GM10248 (cell line): ENCODE measurements at regions of chr1 and their contacts with region 1.

Region 1: DNA sequence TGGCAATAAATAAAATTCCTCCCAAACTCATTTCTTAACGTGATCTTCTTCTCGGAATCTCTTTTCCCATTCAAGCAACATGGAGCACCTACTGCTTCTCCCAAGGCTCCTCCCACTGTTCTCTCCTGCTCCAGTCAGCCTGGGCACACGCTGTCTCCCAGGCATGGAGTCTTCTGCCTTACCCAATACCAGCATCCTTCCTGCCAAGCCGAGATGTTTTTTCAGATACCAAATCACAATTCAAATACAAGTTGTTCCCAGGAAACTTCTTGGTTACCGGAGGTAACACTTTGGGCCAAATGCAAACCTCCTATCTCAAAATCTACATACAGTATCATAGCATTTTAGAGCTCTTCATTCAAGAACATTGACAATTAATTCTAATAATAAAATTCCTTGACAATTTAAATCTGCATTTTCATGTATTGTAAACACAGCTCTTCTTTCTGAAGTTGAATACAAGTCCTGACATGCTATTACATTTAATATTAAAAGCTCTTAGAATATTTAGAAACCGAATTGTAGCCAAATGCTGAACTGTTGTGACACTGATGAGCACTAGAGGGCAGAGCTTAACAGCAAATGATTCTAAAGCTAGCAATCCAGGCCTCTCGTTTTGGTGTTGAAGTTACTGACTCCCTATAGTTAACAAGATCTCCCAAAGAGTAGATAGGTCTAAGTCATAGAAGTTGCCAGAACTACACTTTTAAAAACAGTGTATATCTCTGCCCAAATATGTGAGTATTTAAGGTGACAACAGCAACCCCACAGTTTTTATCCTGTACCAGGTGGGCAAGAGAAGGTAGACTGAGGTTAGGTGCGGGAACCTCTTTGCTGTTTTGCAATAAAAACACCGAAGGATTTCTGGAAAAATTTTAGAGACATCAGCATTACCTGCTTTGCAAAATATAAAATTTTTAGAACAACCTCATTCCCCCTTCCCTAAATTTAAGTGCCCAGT is 52.3 kb downstream of the BCAR3 start:
- DNase-seq: peak; percentile 61
- CTCF ChIP-seq: peak; percentile 78

Region 2: GRCh38 chr1:93471911-93472310 is 157.5 kb before region 1 on chr1:
- CTCF ChIA-PET with region 1: no interaction called
- POLR2A ChIA-PET with region 1: no interaction called
- DNase-seq: no peak
- CTCF ChIP-seq: no peak

Region 3: DNA sequence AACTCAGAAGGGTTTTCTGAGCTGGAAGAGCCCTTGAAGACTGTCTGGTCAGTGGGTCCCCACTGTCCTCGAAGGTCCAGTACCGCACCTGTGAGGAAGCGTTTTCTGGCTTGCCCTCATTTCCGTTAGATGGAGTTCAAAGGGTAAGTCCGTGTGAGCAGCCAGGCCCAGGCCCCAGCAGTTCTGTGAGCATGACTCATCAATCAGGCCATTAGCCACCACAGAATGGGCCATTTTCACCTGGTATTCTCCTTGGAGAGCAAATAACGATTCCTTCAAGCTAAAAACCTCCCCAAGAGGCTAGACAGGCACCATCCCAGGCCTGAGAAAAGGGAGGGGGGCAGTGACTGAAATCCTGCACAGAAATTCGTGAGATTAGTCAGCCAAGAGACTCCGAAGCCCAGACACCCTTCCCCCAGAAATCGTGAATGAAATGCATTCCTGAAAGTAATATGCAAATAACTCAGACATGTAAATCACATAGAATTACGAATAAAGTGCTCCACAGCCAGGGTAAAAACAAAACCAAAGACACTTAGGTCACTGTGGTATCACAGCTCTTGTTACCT is 13.7 kb before region 1 on chr1:
- CTCF ChIA-PET with region 1: interaction called, 116 read pairs
- POLR2A ChIA-PET with region 1: no interaction called
- DNase-seq: peak; percentile 70
- CTCF ChIP-seq: no peak

Region 4: DNA sequence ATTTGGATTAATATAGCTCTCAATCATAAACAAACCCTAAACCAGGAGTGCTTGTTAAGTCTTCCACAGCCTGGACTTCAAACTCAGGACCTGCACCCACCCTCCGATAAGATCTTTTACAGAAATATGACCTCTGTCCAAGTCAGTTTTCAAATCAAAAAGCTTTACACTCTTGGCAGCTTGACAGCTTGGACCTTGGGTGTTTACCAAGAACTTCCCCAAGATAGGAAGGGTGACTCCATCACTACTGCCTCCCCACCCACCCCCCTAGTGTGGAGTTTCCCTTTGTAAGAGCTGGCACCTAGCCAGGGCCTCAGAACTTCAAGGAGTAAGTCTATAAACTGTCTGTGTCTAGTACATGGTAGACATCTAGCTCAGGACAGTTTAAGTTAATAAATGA is 42.7 kb after region 1 on chr1:
- CTCF ChIA-PET with region 1: interaction called, 11 read pairs
- POLR2A ChIA-PET with region 1: no interaction called
- DNase-seq: no peak
- CTCF ChIP-seq: no peak

Region 5: GRCh38 chr1:93701619-93702018 is 72.2 kb after region 1 on chr1:
- CTCF ChIA-PET with region 1: interaction called, 10 read pairs
- POLR2A ChIA-PET with region 1: no interaction called
- DNase-seq: peak; percentile 45
- CTCF ChIP-seq: no peak

Region 6: DNA sequence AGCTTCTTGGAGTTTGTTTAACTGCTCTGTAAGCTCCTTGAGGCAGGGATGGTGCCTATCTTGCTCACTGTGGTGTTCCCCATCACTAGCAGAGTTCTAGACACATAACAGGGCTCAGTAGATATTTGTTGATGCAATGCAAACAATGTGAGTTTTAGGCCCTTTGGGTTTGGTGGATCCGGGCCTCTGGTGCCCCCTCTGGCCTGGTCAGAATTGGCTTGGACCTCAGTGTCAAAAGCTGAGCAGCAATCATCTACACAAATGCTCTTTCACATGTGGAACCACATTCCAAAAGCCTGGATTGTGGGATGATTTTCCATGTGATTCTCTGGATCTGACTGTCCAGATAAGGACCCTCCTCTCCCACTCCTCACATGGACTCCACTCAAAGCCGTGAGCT is 105.6 kb after region 1 on chr1:
- CTCF ChIA-PET with region 1: interaction called, 30 read pairs
- POLR2A ChIA-PET with region 1: no interaction called
- DNase-seq: no peak
- CTCF ChIP-seq: peak; percentile 41

Region 7: GRCh38 chr1:93827633-93828366 is 198.4 kb after region 1 on chr1:
- CTCF ChIA-PET with region 1: interaction called, 628 read pairs
- POLR2A ChIA-PET with region 1: no interaction called
- DNase-seq: no peak
- CTCF ChIP-seq: no peak